K562 (cell line): ENCODE measurements at regions of chr7 and their contacts with region 1.

Region 1: GRCh38 chr7:134432296-134433152 is 26.4 kb downstream of the AKR1B1 start:
- DNase-seq: peak; percentile 89 to 93 (median 90)
- ATAC-seq: peak; percentile 99
- H3K4me3 ChIP-seq: 0 out of 2 replicates have a peak overlapping the region, but pooled peaks have one; percentile 7
- H3K27ac ChIP-seq: no peak overlapping the region
- H3K4me1 ChIP-seq: peaks cover 4 to 6% of the 10 kb centered on the region in 2 experiments; a peak in 2 of 5 replicates
- H3K27me3 ChIP-seq: peaks cover 2 to 10% of the 10 kb centered on the region in 2 experiments; a peak in 2 of 5 replicates
- CTCF ChIP-seq: peak; percentile 91 to 96 (median 93)
- EP300 ChIP-seq: no peak
- POLR2A ChIP-seq: no peak
- RAD21 ChIP-seq: peak; percentile 98

Region 2: GRCh38 chr7:134514663-134515062 is 82.1 kb after region 1 on chr7:
- CTCF ChIA-PET with region 1: interaction called, 95 read pairs
- POLR2A ChIA-PET with region 1: interaction called, 7 read pairs
- in situ Hi-C with region 1: no loop called
- intact Hi-C with region 1: loop called (anchors 1 kb)
- DNase-seq: peak; percentile 76 to 82 (median 81)
- ATAC-seq: peak; percentile 86
- H3K4me3 ChIP-seq: no peak overlapping the region
- H3K27ac ChIP-seq: no peak overlapping the region
- H3K4me1 ChIP-seq: no peaks in the 10 kb centered on the region
- H3K27me3 ChIP-seq: peaks cover 4 to 24% of the 10 kb centered on the region in 2 experiments; a peak in 4 of 5 replicates
- CTCF ChIP-seq: peak; percentile 84 to 88 (median 84)
- EP300 ChIP-seq: no peak
- POLR2A ChIP-seq: no peak
- RAD21 ChIP-seq: peak; percentile 54 to 64

Region 3: GRCh38 chr7:134553976-134554375 is 121.5 kb after region 1 on chr7:
- CTCF ChIA-PET with region 1: interaction called, 4 read pairs
- POLR2A ChIA-PET with region 1: no interaction called
- in situ Hi-C with region 1: no loop called
- intact Hi-C with region 1: loop called (anchors 1 kb)
- DNase-seq: peak in 1 of 4 experiments; percentile 29
- ATAC-seq: peak; percentile 59
- H3K4me3 ChIP-seq: no peak overlapping the region
- H3K27ac ChIP-seq: no peak overlapping the region
- H3K4me1 ChIP-seq: no peaks in the 10 kb centered on the region
- H3K27me3 ChIP-seq: peaks cover 64 to 72% of the 10 kb centered on the region in 2 experiments
- CTCF ChIP-seq: peak; percentile 41 to 58 (median 50); a peak in 4 of 6 replicates
- EP300 ChIP-seq: no peak
- POLR2A ChIP-seq: no peak
- RAD21 ChIP-seq: peak in 1 of 2 experiments; percentile 36; a peak in 1 of 4 replicates

Region 4: GRCh38 chr7:134737566-134738345 is 305.2 kb after region 1 on chr7:
- CTCF ChIA-PET with region 1: no interaction called
- POLR2A ChIA-PET with region 1: no interaction called
- in situ Hi-C with region 1: no loop called
- intact Hi-C with region 1: loop called (anchors 10 kb)
- DNase-seq: no peak
- ATAC-seq: no peak
- H3K4me3 ChIP-seq: no peak overlapping the region
- H3K27ac ChIP-seq: no peak overlapping the region
- H3K4me1 ChIP-seq: peaks cover 6% of the 10 kb centered on the region in 2 experiments; a peak in 3 of 5 replicates
- H3K27me3 ChIP-seq: peaks cover 7 to 12% of the 10 kb centered on the region in 2 experiments; a peak in 3 of 5 replicates
- CTCF ChIP-seq: no peak
- EP300 ChIP-seq: no peak
- POLR2A ChIP-seq: no peak
- RAD21 ChIP-seq: no peak